ENCODE measurements at regions of chr3 and their contacts with region 1.

Region 1: GRCh38 chr3:139677388-139678155 is at the start of gene NMNAT3:
- DNase-seq: peak; percentile 62
- H3K4me3 ChIP-seq: peak within 1 kb of the TSS in 1 of 3 experiments; percentile 42
- H3K27ac ChIP-seq: no peak within 1 kb of the TSS
- H3K4me1 ChIP-seq: no peaks in the 10 kb centered on the region
- H3K27me3 ChIP-seq: no peaks in the 10 kb centered on the region
- CTCF ChIP-seq: no peak
- POLR2A ChIP-seq: no peak
- total RNA-seq, gene NMNAT3: 0.12 and 0.60 TPM in 2 replicates

Region 2: GRCh38 chr3:139534992-139535879 is 142.3 kb before region 1 on chr3:
- CTCF ChIA-PET with region 1: no interaction called
- POLR2A ChIA-PET with region 1: no interaction called
- dilution Hi-C with region 1: no loop called
- intact Hi-C with region 1: loop called (anchors 5 kb)
- DNase-seq: peak; percentile 90
- H3K4me3 ChIP-seq: no peak overlapping the region
- H3K27ac ChIP-seq: no peak overlapping the region
- H3K4me1 ChIP-seq: peaks cover 11% of the 10 kb centered on the region
- H3K27me3 ChIP-seq: peaks cover 0 to 1% of the 10 kb centered on the region in 2 experiments
- CTCF ChIP-seq: no peak
- POLR2A ChIP-seq: no peak

Region 3: DNA sequence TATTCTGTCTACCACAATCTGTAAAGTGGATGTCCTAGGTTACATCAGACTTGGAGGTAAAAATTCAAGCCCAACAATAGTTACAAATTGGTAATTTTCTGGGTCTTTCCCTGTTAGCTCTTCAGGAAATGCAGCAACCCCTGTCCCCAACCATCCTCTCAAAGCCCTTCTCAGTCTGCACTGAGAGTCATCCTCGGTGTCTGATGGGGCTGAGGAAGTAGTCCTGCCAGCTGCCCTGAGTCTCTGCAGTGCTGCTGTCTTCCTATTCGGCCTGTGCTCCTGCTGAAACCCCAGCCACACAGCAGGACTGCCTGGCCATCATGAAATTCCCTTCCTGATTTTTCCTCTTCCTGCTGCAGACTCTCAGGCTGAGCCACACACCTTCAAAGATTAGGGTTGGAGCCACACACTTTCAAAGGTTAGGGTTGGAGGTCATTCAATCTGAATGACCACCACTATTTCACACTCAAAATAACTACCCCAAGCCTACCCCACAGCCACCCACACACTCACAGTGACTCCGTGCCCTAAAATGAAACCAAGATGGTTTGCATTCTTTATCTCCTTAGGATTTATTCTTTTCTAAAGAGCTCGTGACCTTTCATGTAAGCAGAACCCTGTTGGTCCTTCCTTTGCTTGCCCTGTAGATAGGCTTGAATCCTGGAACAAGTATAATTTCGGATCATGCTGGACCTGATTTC is 1017.9 kb after region 1 on chr3:
- CTCF ChIA-PET with region 1: no interaction called
- POLR2A ChIA-PET with region 1: no interaction called
- dilution Hi-C with region 1: no loop called
- intact Hi-C with region 1: no loop called
- DNase-seq: no peak
- H3K4me3 ChIP-seq: no peak overlapping the region
- H3K27ac ChIP-seq: no peak overlapping the region
- H3K4me1 ChIP-seq: no peaks in the 10 kb centered on the region
- H3K27me3 ChIP-seq: no peaks in the 10 kb centered on the region
- CTCF ChIP-seq: no peak
- POLR2A ChIP-seq: no peak